Panc1 (cell line): ENCODE measurements at regions of chr1 and their contacts with region 1.

Region 1: DNA sequence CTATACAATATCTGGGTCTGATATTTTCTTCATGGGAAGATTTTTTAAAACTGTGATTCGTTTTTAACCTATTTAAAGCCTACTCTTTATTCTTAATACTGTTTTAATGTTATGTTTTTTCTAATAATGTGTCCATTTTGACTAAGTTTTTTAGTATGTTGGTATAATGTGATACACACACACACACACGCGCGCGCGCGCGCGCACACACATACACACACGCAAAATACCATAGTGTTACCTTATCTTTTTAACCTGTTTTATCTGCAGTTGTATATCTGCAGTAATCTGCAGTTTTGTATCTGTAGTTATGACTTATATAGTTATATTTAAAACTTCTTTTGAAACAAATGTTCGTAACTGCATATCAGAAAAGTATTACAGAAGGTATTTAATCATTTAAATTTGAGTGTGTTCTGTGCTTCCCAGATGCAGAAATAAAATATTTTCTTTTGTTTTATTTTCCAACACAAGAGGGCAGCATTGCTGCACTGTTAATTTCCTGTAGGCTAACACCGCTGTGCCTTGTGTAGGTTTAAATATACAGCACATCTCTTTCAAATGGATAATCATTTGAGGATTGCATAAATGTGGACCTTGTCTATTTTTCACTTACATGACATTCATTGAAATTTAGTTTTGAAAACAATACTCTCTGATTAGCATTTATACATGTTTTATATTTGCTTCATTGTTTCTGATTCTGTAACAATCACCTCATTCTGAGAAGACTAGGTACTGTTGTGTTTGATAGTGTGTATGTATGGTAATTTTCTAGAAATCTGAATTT is 166.1 kb downstream of the PDE4B start:
- DNase-seq: peak; percentile 18
- ATAC-seq: peak; percentile 88
- H3K4me3 ChIP-seq: no peak overlapping the region
- H3K27ac ChIP-seq: no peak overlapping the region
- H3K4me1 ChIP-seq: no peaks in the 10 kb centered on the region
- H3K27me3 ChIP-seq: no peaks in the 10 kb centered on the region; the same call in 1 of the 2 replicates
- CTCF ChIP-seq: peak; percentile 68; the same call in 1 of the 2 replicates

Region 2: GRCh38 chr1:66242646-66243547 is 284.1 kb after region 1 on chr1:
- CTCF ChIA-PET with region 1: interaction called, 7 read pairs
- POLR2A ChIA-PET with region 1: no interaction called
- in situ Hi-C with region 1: no loop called
- intact Hi-C with region 1: loop called (anchors 1 kb)
- DNase-seq: peak; percentile 61
- ATAC-seq: peak; percentile 100
- H3K4me3 ChIP-seq: no peak overlapping the region
- H3K27ac ChIP-seq: no peak overlapping the region
- H3K4me1 ChIP-seq: no peaks in the 10 kb centered on the region
- H3K27me3 ChIP-seq: no peaks in the 10 kb centered on the region
- CTCF ChIP-seq: peak; percentile 97

Region 3: DNA sequence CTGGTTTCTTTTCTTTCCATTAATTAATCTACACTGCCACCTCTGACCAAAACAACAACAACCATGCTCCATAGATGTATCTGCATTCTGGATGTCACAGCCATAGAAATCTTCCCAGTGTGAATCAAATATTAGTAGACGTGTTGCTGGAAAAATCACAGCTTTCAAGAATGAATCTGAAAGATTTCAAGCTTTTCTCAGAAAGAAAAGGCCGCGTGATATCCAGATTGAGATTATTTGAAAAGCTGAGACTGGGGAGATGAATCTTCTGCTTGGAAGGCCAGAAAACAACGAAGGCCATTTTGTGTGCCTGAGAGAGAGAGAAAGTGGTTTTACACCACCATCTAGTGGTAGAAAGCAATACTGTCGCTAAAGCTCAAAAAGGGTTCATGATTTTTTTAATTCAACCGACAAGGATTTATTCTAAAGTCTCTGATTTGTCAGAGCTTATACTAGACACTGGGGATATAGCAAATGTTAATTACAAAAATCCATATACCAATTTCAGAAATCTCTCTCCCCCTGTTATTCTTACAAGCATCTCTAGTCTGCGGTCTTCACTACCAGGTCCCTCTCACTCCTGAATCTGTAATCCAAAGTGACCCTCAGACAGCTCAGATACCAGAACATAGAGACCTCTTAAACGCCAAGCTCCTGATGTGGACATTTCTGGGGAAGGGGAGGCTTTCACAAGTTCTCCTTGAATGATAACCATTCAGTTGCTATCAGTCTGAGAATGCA is 487.7 kb after region 1 on chr1:
- CTCF ChIA-PET with region 1: interaction called, 4 read pairs
- POLR2A ChIA-PET with region 1: no interaction called
- in situ Hi-C with region 1: no loop called
- intact Hi-C with region 1: loop called (anchors 1 kb)
- DNase-seq: peak; percentile 76
- ATAC-seq: peak; percentile 85
- H3K4me3 ChIP-seq: no peak overlapping the region
- H3K27ac ChIP-seq: no peak overlapping the region
- H3K4me1 ChIP-seq: no peaks in the 10 kb centered on the region
- H3K27me3 ChIP-seq: no peaks in the 10 kb centered on the region
- CTCF ChIP-seq: peak; percentile 74